ENCODE measurements at regions of chr4 and their contacts with region 1.

Region 1: DNA sequence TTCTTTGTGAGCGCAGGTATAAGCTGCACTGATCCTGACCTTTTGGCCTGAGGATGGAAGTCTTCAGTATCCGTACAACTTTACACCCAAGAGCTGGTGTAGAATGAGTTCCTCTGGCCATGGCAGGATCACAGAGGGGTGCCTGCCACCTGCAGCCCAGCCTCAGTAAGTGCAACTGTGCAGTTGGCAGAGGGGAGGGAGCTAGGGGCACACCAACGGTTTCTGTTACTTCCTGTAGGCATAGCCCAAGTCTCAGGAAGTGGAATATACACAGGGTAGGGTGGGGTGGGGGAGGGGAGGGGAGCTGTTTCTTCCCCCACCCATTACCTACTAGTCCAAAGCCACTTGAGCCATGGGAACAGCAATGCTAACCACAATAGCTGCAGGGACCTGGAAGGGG is 85.4 kb upstream of the GBA3 start:
- DNase-seq: peak; percentile 31
- ATAC-seq: peak; percentile 97
- H3K4me3 ChIP-seq: no peak overlapping the region
- H3K27ac ChIP-seq: no peak overlapping the region
- H3K4me1 ChIP-seq: no peaks in the 10 kb centered on the region
- H3K27me3 ChIP-seq: no peaks in the 10 kb centered on the region
- CTCF ChIP-seq: peak; percentile 64
- POLR2A ChIP-seq: no peak
- RAD21 ChIP-seq: peak; percentile 63

Region 2: GRCh38 chr4:21976166-21976565 is 631.2 kb before region 1 on chr4:
- CTCF ChIA-PET with region 1: no interaction called
- POLR2A ChIA-PET with region 1: no interaction called
- dilution Hi-C with region 1: no loop called
- in situ Hi-C with region 1: no loop called
- intact Hi-C with region 1: no loop called
- DNase-seq: no peak
- ATAC-seq: no peak
- H3K4me3 ChIP-seq: no peak overlapping the region
- H3K27ac ChIP-seq: no peak overlapping the region
- H3K4me1 ChIP-seq: no peaks in the 10 kb centered on the region
- H3K27me3 ChIP-seq: no peaks in the 10 kb centered on the region
- CTCF ChIP-seq: no peak
- POLR2A ChIP-seq: no peak
- RAD21 ChIP-seq: no peak

Region 3: DNA sequence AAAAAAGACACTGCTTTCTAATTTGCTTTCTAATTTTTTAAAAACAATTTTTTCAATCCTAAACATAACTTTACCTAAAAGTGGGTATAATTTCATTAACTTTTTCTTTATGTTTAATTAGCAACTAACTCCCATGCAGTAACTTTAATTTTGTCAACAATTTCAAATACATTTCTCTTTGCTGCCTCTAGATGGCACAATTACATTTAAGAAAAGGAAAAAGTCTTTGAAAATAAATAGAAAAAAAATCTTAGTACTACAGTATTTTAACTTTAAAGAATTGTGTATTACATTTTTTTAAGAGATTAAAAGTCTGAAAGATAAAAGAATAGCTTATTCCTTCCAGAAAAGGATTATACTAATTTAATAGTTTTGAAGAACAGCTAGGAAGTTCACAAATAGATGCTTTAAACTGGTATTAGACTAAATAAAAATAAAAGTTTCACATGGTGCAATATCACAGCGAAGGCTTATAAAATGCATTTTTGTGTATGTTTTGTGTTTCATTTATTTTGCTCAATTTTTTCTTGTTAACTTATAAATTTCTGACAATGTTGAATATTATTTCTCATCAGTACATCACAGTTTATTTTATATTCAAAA is 196.6 kb before region 1 on chr4:
- CTCF ChIA-PET with region 1: interaction called, 6 read pairs
- POLR2A ChIA-PET with region 1: no interaction called
- dilution Hi-C with region 1: no loop called
- in situ Hi-C with region 1: loop called (anchors 5 kb)
- intact Hi-C with region 1: loop called (anchors 1 kb)
- DNase-seq: peak; percentile 33
- ATAC-seq: 0 out of 2 replicates have a peak, but pooled peaks have one; percentile 14
- H3K4me3 ChIP-seq: no peak overlapping the region
- H3K27ac ChIP-seq: no peak overlapping the region
- H3K4me1 ChIP-seq: no peaks in the 10 kb centered on the region
- H3K27me3 ChIP-seq: no peaks in the 10 kb centered on the region
- CTCF ChIP-seq: peak; percentile 62
- POLR2A ChIP-seq: no peak
- RAD21 ChIP-seq: peak; percentile 57

Region 4: DNA sequence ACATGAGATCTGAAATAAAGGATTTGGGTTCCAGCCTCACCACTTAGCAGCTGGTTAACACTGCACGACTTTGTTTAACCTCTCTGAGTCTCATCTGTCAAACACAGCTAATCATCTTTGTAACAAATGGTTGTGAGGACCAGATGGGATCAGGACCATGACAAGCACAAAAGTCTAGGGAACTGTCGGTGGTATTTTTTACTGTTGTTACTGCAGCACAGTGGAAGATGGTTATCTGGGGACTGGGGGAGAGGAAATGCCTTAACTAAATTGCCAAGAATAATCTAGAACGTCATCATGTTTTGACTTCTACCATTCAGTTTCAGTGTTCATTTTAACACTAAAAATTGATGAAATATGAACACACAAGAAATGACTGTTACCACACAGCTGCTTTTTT is 191.0 kb before region 1 on chr4:
- CTCF ChIA-PET with region 1: interaction called, 6 read pairs
- POLR2A ChIA-PET with region 1: no interaction called
- dilution Hi-C with region 1: no loop called
- in situ Hi-C with region 1: loop called (anchors 5 kb)
- intact Hi-C with region 1: no loop called
- DNase-seq: peak; percentile 4
- ATAC-seq: 0 out of 2 replicates have a peak, but pooled peaks have one; percentile 24
- H3K4me3 ChIP-seq: no peak overlapping the region
- H3K27ac ChIP-seq: no peak overlapping the region
- H3K4me1 ChIP-seq: no peaks in the 10 kb centered on the region
- H3K27me3 ChIP-seq: no peaks in the 10 kb centered on the region
- CTCF ChIP-seq: no peak
- POLR2A ChIP-seq: no peak
- RAD21 ChIP-seq: no peak